CD4-positive, alpha-beta memory T cell (primary cell): ENCODE measurements at regions of chr2 and their contacts with region 1.

Region 1: GRCh38 chr2:230411570-230412370 is 4.2 kb upstream of the SP100 start:
- DNase-seq: peak; percentile 61 to 74 (median 66)
- H3K4me3 ChIP-seq: peak overlapping the region; percentile 83 to 89
- H3K4me3 Mint-ChIP-seq: peak overlapping the region; percentile 97 to 100 (median 100)
- H3K27ac ChIP-seq: peak overlapping the region; percentile 88
- H3K27ac Mint-ChIP-seq: peak overlapping the region; percentile 96 to 100 (median 99)
- H3K4me1 ChIP-seq: peaks cover 67% of the 10 kb centered on the region
- H3K4me1 Mint-ChIP-seq: peaks cover 41 to 91% (median 62%) of the 10 kb centered on the region in 4 donors
- H3K27me3 ChIP-seq: no peaks in the 10 kb centered on the region
- H3K27me3 Mint-ChIP-seq: no peaks in the 10 kb centered on the region

Region 2: DNA sequence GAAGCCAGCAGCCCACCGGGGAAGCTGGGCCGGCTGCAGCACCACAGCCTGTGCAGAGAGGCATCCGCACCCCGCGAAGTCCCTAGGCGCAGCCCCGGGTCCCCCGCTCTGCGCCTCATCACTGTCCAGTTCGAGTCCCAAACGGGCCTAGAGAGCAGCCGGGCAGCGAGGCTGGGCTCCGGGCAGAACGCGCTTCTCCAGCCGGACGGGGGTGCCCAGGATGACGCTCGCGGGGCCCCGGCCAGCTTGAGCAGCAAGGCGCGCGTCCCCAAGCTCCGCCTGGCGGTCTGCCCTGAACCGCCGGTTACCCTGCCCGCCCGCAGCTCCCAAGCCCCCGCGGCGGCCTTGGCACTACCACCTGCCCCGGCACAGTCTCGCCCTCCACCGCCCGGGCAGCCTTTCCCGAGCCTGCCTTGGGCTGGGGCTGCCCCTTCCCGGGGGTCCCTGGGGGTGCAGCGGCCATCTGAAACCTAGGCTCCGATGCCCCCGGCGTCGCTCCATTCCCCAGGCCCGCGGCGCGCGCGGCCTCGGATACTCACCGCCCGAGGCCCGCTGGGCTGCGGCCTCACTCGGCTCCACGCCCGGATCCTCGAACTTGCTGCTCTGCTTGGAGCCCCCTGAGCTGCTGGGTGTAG is 343.6 kb before region 1 on chr2:
- CTCF ChIA-PET with region 1: no interaction called
- POLR2A ChIA-PET with region 1: no interaction called
- intact Hi-C with region 1: loop called (anchors 5 kb)
- DNase-seq: peak in 4 of 5 donors; percentile 22 to 51 (median 32)
- H3K4me3 ChIP-seq: peak overlapping the region in 1 of 2 donors; percentile 70
- H3K4me3 Mint-ChIP-seq: peak overlapping the region; percentile 89 to 94 (median 92)
- H3K27ac ChIP-seq: no peak overlapping the region
- H3K27ac Mint-ChIP-seq: peak overlapping the region in 3 of 7 donors; percentile 12 to 67 (median 30)
- H3K4me1 ChIP-seq: peaks cover 12% of the 10 kb centered on the region
- H3K4me1 Mint-ChIP-seq: peaks cover 8 to 15% (median 10%) of the 10 kb centered on the region in 4 donors
- H3K27me3 ChIP-seq: no peaks in the 10 kb centered on the region
- H3K27me3 Mint-ChIP-seq: peaks cover 4 to 11% of the 10 kb centered on the region in 2 donors

Region 3: DNA sequence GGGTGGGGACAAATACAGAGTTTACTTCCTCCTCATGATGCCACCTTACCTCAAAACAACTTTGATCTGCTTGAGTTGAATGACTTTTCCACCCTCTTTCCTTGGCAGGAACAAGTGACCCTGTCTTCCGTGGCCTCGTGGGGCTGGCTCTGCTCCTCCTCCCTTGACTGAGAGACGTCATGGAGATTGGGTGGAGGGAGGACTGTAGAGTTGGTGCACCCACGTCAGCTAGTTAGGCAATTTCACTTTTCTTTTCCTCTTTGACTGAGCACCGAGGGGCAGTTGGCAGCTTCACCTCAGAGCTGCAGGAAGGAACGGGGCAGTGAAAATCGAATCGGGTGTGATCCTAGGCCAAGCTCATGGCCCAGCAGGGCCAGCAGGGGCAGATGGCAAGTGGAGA is 186.3 kb before region 1 on chr2 and contains the start of gene SP140:
- CTCF ChIA-PET with region 1: no interaction called
- POLR2A ChIA-PET with region 1: interaction called, 17 read pairs
- intact Hi-C with region 1: loop called (anchors 5 kb)
- DNase-seq: peak; percentile 86 to 97 (median 88)
- H3K4me3 ChIP-seq: peak within 1 kb of the TSS; percentile 39 to 68
- H3K4me3 Mint-ChIP-seq: peak within 1 kb of the TSS; percentile 88 to 97 (median 90)
- H3K27ac ChIP-seq: peak within 1 kb of the TSS; percentile 79
- H3K27ac Mint-ChIP-seq: peak within 1 kb of the TSS; percentile 96 to 99 (median 97)
- H3K4me1 ChIP-seq: peaks cover 60% of the 10 kb centered on the region
- H3K4me1 Mint-ChIP-seq: peaks cover 47 to 77% (median 56%) of the 10 kb centered on the region in 4 donors
- H3K27me3 ChIP-seq: no peaks in the 10 kb centered on the region
- H3K27me3 Mint-ChIP-seq: no peaks in the 10 kb centered on the region
- total RNA-seq, gene SP140: 70.8 to 79.3 TPM

Region 4: DNA sequence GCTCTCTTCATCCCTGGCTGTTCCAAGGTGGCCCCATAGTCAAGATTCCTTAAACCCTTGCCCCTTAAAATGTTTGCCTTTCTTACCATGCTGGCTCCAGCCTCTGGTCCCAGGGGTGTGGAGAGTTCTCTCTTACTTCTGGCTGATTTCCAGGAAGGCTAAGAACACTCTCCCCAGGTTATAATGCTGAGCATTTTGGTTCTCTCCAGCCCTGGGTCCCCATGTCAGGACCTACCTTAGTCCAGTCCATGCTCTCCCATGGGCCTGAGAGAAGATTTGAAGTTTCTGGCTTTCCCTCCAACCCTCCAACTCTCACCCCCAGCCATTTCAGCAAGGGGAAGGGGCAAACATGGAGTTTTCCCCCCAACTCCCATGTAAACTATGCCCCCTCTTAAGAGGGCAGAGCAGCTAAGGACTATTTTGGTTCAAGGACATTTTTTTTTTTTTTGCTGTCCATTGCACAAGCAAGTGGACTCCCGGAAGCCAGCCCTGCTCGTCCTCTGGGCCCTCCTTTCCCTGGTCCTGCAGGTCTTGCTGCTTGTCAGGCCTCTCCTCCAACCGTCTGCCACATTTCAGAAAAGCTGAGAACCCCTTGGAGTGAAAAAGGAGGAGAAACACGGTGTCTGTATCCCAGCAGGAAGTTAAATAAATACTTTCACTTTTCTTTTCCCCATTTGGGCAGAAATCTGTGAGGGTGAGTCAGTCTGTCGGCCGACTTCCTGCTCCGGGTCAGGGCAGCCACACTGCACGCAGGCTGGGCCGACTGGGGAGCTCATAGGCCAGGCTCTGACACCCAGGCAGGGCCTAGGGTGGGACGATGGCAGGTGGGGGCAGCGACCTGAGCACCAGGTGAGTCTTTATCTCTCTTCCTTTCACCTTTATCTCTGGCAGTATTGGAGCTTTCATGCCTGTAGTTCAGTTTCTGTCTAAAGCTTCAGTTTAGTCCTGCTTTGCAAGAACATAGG is 85.0 kb before region 1 on chr2 and contains the start of gene SP140L:
- CTCF ChIA-PET with region 1: no interaction called
- POLR2A ChIA-PET with region 1: interaction called, 17 read pairs
- intact Hi-C with region 1: loop called (anchors 2 kb)
- DNase-seq: peak; percentile 73 to 89 (median 79)
- H3K4me3 ChIP-seq: peak within 1 kb of the TSS; percentile 51 to 82
- H3K4me3 Mint-ChIP-seq: peak within 1 kb of the TSS; percentile 90 to 98 (median 94)
- H3K27ac ChIP-seq: peak within 1 kb of the TSS; percentile 84
- H3K27ac Mint-ChIP-seq: peak within 1 kb of the TSS; percentile 94 to 99 (median 97)
- H3K4me1 ChIP-seq: peaks cover 78% of the 10 kb centered on the region
- H3K4me1 Mint-ChIP-seq: peaks cover 48 to 90% (median 75%) of the 10 kb centered on the region in 4 donors
- H3K27me3 ChIP-seq: no peaks in the 10 kb centered on the region
- H3K27me3 Mint-ChIP-seq: no peaks in the 10 kb centered on the region
- total RNA-seq, gene SP140L: 98.6 to 102 TPM

Region 5: GRCh38 chr2:230457073-230457768 is 45.5 kb after region 1 on chr2:
- CTCF ChIA-PET with region 1: interaction called, 4 read pairs
- POLR2A ChIA-PET with region 1: interaction called, 3 read pairs
- intact Hi-C with region 1: loop called (anchors 5 kb)
- DNase-seq: no peak
- H3K4me3 ChIP-seq: no peak overlapping the region
- H3K4me3 Mint-ChIP-seq: peak overlapping the region in 7 of 8 donors; percentile 3 to 67 (median 62)
- H3K27ac ChIP-seq: peak overlapping the region; percentile 5
- H3K27ac Mint-ChIP-seq: peak overlapping the region; percentile 4 to 92 (median 77)
- H3K4me1 ChIP-seq: peaks cover 36% of the 10 kb centered on the region
- H3K4me1 Mint-ChIP-seq: peaks cover 52 to 75% (median 64%) of the 10 kb centered on the region in 4 donors
- H3K27me3 ChIP-seq: no peaks in the 10 kb centered on the region
- H3K27me3 Mint-ChIP-seq: no peaks in the 10 kb centered on the region

Region 6: GRCh38 chr2:230614913-230615332 is 203.2 kb after region 1 on chr2:
- CTCF ChIA-PET with region 1: interaction called, 3 read pairs
- POLR2A ChIA-PET with region 1: no interaction called
- intact Hi-C with region 1: loop called (anchors 2 kb)
- DNase-seq: no peak
- H3K4me3 ChIP-seq: no peak overlapping the region
- H3K4me3 Mint-ChIP-seq: no peak overlapping the region
- H3K27ac ChIP-seq: no peak overlapping the region
- H3K27ac Mint-ChIP-seq: no peak overlapping the region
- H3K4me1 ChIP-seq: peaks cover 25% of the 10 kb centered on the region
- H3K4me1 Mint-ChIP-seq: peaks cover 9 to 19% (median 16%) of the 10 kb centered on the region in 4 donors
- H3K27me3 ChIP-seq: no peaks in the 10 kb centered on the region
- H3K27me3 Mint-ChIP-seq: no peaks in the 10 kb centered on the region

Region 7: DNA sequence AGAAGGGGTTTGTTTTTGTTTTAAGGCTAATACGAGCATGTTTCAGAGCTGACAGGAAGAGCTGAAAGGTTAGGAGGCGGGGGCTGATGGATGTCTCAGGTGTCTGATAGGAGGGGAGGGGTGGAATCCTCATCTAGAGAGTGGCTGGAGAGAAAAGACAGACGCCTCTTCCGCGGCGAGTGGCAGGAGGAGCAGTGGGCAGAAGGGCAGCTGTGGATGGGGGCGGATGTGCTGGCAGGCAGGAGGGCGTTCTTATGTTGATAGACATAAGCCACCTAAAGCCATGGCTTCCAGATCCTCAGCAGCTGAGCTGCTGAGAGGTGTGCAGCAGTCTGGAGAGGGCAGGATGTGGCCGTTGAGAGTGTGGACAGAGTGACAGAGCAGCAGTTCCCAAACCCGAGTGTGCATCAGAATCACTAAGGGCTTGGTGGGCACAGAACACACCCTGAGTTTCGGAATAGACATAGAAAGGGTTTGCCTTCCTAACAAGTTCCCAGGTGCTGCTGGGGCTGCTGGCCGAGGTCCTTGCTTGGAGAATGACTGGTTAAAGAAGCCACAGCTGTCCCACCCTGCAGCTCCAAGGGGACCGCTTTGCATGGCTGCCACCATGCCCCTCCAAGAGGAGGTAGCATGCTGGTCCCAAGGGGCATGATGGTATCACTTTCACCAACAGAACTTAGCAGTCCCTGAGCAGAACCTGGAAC is 449.9 kb after region 1 on chr2:
- CTCF ChIA-PET with region 1: no interaction called
- POLR2A ChIA-PET with region 1: no interaction called
- intact Hi-C with region 1: no loop called
- DNase-seq: no peak
- H3K4me3 ChIP-seq: no peak overlapping the region
- H3K4me3 Mint-ChIP-seq: peak overlapping the region in 4 of 8 donors; percentile 8 to 78 (median 35)
- H3K27ac ChIP-seq: no peak overlapping the region
- H3K27ac Mint-ChIP-seq: peak overlapping the region in 3 of 7 donors; percentile 1 to 75 (median 5)
- H3K4me1 ChIP-seq: peaks cover 32% of the 10 kb centered on the region
- H3K4me1 Mint-ChIP-seq: peaks cover 13 to 55% (median 27%) of the 10 kb centered on the region in 4 donors
- H3K27me3 ChIP-seq: peaks cover 4% of the 10 kb centered on the region
- H3K27me3 Mint-ChIP-seq: peaks cover 6 to 15% of the 10 kb centered on the region in 2 donors